AG04449 (cell line): ENCODE measurements at regions of chr7 and their contacts with region 1.

Region 1: DNA sequence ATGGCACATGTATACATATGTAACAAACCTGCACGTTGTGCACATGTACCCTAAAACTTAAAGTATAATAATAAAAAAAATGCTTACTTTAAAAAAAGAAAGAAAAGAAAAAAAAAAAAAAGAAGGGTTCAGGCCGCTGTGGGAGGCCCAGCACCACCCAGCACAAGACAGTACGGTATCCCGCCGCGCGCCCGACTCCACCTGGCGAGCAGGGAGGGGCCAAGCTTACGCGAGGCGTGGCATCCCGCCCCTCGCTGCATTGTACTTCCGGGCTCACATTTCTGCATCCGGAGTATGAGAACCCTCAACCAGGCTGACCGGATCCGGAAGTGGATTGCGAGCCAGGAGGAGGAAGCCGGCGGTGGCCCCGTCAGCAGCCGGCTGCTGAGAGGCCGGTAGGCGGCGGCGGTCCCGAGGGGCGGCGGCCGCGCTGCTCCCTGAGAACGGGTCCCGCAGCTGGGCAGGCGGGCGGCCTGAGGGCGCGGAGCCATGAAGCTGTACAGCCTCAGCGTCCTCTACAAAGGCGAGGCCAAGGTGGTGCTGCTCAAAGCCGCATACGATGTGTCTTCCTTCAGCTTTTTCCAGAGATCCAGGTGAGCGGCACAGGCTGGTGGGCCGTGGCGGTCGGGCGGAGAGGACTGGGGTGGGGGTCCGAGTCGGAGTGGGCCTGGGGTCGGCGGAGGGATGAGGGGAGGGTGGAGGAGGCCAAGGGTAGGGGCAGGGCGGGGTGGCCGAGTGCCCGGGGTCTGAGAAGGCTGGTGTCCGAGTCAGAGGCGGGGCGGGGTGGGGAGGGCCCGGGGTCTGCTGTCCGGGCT is at the start of gene YKT6:
- DNase-seq: peak; percentile 41
- H3K4me3 ChIP-seq: peak within 1 kb of the TSS; percentile 100
- CTCF ChIP-seq: peak; percentile 58

Region 2: DNA sequence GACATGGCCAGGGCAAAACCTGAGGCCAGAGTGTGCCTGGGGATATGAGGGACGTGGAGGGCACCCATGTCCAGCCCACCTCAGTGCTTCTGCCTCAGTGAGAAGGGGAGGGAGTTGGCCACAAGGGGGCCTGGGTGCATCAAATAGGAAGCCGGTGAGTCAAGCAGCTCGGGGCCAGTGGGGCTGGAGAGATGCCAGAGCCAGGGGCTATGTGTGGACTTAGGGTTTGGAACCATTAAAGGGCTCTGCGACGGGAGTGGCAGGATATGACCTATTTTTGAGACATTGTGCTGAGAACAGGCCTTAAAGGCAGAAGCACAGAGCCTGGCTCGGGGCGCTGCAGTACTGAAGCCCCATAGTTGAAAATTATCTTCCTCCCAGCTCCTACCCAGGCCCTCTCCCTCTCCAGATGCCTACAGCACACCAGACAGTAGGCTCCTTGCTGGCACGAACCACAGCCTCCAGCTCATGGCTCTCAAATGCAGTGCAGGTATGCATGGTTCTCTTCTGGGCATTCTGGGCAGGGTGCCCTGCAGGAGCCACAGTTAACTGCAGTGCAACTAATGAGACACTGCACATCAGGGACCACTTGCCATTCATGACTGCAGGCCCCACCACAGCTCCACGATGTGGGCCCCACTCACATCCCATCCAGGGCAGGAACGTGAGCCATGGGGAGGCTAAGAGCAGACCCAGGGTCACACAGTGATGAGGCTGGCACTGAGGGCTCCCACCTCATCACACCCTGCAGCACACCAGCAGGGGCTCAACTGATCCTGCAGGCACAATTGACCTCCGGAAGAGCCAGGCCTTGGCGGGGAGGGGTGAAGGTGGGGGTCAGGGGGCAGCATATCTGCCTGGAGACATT is 128.3 kb before region 1 on chr7:
- CTCF ChIA-PET with region 1: interaction called, 88 read pairs
- POLR2A ChIA-PET with region 1: interaction called, 5 read pairs
- DNase-seq: no peak
- H3K4me3 ChIP-seq: no peak overlapping the region
- CTCF ChIP-seq: peak; percentile 94

Region 3: GRCh38 chr7:44123190-44124003 is 77.5 kb before region 1 on chr7 and contains the start of gene POLD2:
- CTCF ChIA-PET with region 1: interaction called, 14 read pairs
- POLR2A ChIA-PET with region 1: no interaction called
- DNase-seq: peak; percentile 56
- H3K4me3 ChIP-seq: peak within 1 kb of the TSS; percentile 80
- CTCF ChIP-seq: no peak

Region 4: GRCh38 chr7:44184206-44184872 is 16.5 kb before region 1 on chr7:
- CTCF ChIA-PET with region 1: interaction called, 38 read pairs
- POLR2A ChIA-PET with region 1: no interaction called
- DNase-seq: peak; percentile 54
- H3K4me3 ChIP-seq: no peak overlapping the region
- CTCF ChIP-seq: no peak

Region 5: DNA sequence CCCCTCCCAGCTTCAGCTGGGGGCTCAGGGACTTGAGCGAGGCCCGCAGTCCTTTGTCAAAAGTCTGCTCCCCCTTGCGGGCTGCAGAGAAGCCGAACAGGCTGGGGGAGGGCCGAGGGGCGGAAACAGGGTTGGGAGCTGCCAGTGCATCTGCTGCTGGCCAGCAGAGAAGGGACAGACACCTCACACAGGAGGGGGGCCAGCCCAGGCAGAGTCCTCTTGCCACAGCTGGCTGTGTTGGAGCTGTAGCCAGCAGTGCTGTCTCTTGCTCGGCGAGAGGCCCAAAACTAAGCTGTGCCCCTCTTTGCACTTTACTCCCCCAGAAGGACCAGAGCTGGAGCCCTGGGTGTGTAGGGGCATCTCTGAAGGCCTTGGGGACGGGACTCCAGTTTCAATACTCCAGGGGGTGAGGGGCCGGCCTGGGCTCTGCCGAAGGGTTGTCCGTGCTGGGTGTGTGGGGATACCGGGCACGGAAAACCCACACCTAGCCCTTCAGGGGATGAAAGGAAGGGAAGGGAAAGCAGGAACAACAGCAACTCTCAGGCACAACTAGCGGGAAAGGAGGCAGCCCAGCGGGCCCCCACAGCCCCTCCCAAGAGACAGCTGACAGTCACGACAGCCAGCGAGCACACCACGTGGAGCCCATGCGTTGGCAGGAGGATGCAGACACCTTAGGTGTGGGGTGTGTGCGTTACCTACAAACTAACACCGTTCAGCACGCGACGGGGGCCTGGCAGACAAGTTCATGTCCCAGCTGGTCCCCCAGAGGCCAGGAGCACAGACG is 17.8 kb after region 1 on chr7:
- CTCF ChIA-PET with region 1: interaction called, 12 read pairs
- POLR2A ChIA-PET with region 1: no interaction called
- DNase-seq: no peak
- H3K4me3 ChIP-seq: no peak overlapping the region
- CTCF ChIP-seq: peak; percentile 10

Region 6: GRCh38 chr7:44264221-44264931 is 63.5 kb after region 1 on chr7:
- CTCF ChIA-PET with region 1: no interaction called
- POLR2A ChIA-PET with region 1: no interaction called
- DNase-seq: no peak
- H3K4me3 ChIP-seq: no peak overlapping the region
- CTCF ChIP-seq: no peak